ENCODE measurements at regions of chr5 and their contacts with region 1.

Region 1: DNA sequence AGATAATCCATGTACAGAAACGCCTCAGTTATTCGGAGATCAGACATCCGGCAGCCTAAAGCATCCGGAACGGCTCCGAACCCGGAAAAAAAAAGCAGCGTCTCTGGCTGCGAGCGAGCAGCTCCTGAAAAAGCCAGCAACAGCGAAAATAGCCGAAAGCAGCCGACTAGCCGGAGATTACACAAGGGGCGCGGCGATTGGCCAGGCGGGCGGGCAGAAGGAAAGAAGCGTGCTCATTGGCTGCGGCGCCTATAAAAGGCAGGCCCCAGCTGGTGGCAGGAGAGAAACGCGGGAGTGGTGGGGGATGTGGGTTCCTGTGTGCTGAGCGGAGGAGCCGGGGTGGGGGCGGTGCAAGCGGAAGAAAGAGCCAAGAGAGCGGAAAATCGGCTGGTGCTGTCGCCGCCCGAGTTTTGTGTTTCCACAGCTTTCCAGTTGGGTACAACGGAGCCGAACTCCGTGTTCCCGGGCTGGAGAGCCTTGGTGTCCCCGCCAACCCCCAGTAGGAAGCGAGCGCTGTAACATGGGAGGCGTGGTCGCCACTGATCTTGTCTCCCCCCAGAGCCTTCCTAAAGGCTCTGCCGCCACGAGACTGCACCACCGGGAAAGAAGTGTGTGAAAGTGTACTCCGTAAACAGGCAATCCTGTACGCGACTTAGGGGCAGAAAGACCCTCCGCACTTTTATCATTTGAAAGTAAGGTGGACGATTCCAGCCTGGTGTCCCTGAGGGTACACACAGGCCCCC is at the start of gene ARL15:
- DNase-seq: peak; percentile 64
- ATAC-seq: peak; percentile 96
- H3K4me3 ChIP-seq: peak within 1 kb of the TSS; percentile 80 to 85
- H3K27ac ChIP-seq: peak within 1 kb of the TSS; percentile 84
- H3K4me1 ChIP-seq: peaks cover 13% of the 10 kb centered on the region
- H3K27me3 ChIP-seq: no peaks in the 10 kb centered on the region
- CTCF ChIP-seq: no peak
- total RNA-seq, gene ARL15: 16.5 TPM

Region 2: GRCh38 chr5:54229041-54229780 is 81.4 kb before region 1 on chr5:
- CTCF ChIA-PET with region 1: no interaction called
- POLR2A ChIA-PET with region 1: no interaction called
- in situ Hi-C with region 1: no loop called
- intact Hi-C with region 1: no loop called
- DNase-seq: no peak
- ATAC-seq: peak; percentile 91
- H3K4me3 ChIP-seq: no peak overlapping the region
- H3K27ac ChIP-seq: no peak overlapping the region
- H3K4me1 ChIP-seq: no peaks in the 10 kb centered on the region
- H3K27me3 ChIP-seq: no peaks in the 10 kb centered on the region
- CTCF ChIP-seq: peak; percentile 90

Region 3: DNA sequence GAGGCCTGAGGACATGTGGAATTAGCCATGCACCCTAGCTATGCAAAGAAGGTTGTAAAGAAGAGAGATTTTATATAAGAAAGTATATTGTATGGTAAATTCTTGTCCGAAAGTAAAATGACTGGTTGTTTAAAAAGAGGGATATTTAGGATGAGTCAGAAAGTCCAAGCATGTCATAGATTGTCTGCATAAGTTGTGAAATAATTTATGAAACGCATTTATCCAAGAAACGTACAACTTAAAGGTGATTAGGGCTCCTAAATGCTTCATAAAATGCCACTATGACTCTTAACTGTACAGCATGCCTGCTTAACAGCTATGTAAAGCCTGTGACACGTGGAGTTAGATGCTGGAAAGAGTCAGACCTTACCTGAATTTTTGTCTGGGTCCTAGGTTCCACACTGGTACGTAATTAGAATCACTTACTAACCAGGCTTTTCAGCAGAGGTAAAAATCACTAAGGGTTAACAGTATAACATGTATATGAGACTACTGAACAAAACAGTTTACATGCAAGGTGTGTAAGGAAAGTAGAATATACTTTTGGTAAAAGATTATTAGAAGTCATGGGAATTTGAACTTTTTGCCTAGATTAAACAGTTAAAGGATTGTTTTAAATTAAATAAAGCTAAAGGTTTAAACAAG is 36.7 kb after region 1 on chr5:
- CTCF ChIA-PET with region 1: interaction called, 10 read pairs
- POLR2A ChIA-PET with region 1: no interaction called
- in situ Hi-C with region 1: no loop called
- intact Hi-C with region 1: no loop called
- DNase-seq: no peak
- ATAC-seq: no peak
- H3K4me3 ChIP-seq: no peak overlapping the region
- H3K27ac ChIP-seq: no peak overlapping the region
- H3K4me1 ChIP-seq: no peaks in the 10 kb centered on the region
- H3K27me3 ChIP-seq: no peaks in the 10 kb centered on the region
- CTCF ChIP-seq: no peak

Region 4: GRCh38 chr5:54415896-54416601 is 105.4 kb after region 1 on chr5:
- CTCF ChIA-PET with region 1: no interaction called
- POLR2A ChIA-PET with region 1: no interaction called
- in situ Hi-C with region 1: no loop called
- intact Hi-C with region 1: loop called (anchors 5 kb)
- DNase-seq: no peak
- ATAC-seq: no peak
- H3K4me3 ChIP-seq: no peak overlapping the region
- H3K27ac ChIP-seq: no peak overlapping the region
- H3K4me1 ChIP-seq: no peaks in the 10 kb centered on the region
- H3K27me3 ChIP-seq: no peaks in the 10 kb centered on the region
- CTCF ChIP-seq: no peak

Measured in Panc1 (cell line).